ENCODE measurements at regions of chr5 and their contacts with region 1.

Region 1: DNA sequence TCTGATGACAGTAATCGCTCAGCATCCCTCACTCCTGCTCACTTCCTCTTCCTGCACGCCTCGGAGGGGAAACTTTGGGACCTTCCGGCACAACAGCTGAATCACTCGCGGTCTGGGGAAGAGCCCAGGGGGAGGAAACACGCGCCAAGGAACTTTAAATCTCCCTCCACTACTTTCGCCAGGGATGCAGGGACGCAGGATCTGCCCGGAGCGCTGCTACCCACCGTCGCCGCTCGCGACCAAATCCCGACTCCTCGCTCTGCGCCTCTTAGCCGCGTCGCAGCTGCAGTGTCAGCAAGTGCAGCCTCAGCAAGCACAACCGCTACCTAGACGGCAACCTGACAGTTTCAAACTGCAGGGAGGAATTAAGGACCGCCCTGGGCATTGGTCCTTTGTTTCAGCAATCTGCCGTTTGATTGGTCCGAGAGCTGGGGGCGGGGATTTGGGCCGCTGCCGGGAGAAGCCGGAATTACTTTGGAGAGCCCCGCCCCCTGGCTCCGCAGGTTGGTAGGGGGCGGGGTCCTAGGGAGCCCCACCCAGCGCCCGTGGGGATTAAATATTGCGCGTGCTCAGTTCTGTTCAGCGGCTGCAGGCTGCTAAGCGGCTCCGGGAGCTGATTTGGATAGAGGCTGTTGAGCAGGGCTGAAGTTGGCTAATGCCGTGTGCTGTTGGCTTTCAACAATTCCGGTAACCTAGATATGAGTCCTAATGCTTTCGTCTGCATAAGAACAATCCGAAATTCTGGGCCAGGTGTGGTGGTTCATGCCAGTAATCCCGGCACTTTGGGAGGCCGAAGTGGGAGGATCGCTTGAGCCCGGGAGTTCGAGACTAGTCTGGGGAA is at the start of gene POC5:
- DNase-seq: peak; percentile 98
- ATAC-seq: peak; percentile 95
- H3K4me3 ChIP-seq: peak within 1 kb of the TSS; percentile 80 to 99 (median 89)
- H3K4me3 Mint-ChIP-seq: peak within 1 kb of the TSS; percentile 100
- H3K27ac ChIP-seq: peak within 1 kb of the TSS; percentile 80 to 85
- H3K27ac Mint-ChIP-seq: peak within 1 kb of the TSS; percentile 99
- H3K4me1 ChIP-seq: peaks cover 12 to 18% of the 10 kb centered on the region in 2 donors
- H3K4me1 Mint-ChIP-seq: peaks cover 37% of the 10 kb centered on the region
- H3K27me3 ChIP-seq: peaks cover 0 to 4% (median 0%) of the 10 kb centered on the region in 4 experiments
- H3K27me3 Mint-ChIP-seq: peaks cover 6% of the 10 kb centered on the region
- CTCF ChIP-seq: no peak
- total RNA-seq, gene POC5: 22.7 and 25.5 TPM in 2 replicates

Region 2: GRCh38 chr5:74684900-74685851 is 1032.1 kb before region 1 on chr5 and contains the start of gene HEXB:
- CTCF ChIA-PET with region 1: no interaction called
- POLR2A ChIA-PET with region 1: no interaction called
- intact Hi-C with region 1: loop called (anchors 2 kb)
- DNase-seq: peak; percentile 80
- ATAC-seq: peak; percentile 85
- H3K4me3 ChIP-seq: peak within 1 kb of the TSS; percentile 80 to 98 (median 88)
- H3K4me3 Mint-ChIP-seq: peak within 1 kb of the TSS; percentile 87
- H3K27ac ChIP-seq: peak within 1 kb of the TSS; percentile 42 to 67
- H3K27ac Mint-ChIP-seq: peak within 1 kb of the TSS; percentile 75
- H3K4me1 ChIP-seq: peaks cover 12 to 16% of the 10 kb centered on the region in 2 donors
- H3K4me1 Mint-ChIP-seq: peaks cover 20% of the 10 kb centered on the region
- H3K27me3 ChIP-seq: no peaks in the 10 kb centered on the region
- H3K27me3 Mint-ChIP-seq: peaks cover 2% of the 10 kb centered on the region
- CTCF ChIP-seq: no peak
- total RNA-seq, gene HEXB: 47.1 and 55.3 TPM in 2 replicates

Region 3: DNA sequence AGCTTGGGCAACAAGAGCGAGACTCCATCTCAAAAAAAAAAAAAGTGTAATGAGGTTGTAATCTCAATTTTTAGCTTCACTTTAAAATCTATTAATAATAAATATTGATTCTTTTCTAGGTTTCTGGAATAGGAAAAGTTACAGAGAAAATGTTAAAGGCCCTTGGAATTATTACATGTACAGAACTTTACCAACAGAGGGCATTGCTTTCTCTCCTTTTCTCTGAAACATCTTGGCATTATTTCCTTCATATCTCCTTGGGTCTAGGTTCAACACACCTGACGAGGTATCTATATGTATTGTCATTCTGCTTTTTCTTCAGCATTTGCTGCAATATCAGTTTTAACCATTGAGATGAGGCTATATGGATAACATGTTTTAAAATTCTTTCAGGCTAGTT is 132.7 kb before region 1 on chr5:
- CTCF ChIA-PET with region 1: no interaction called
- POLR2A ChIA-PET with region 1: no interaction called
- intact Hi-C with region 1: no loop called
- DNase-seq: no peak
- ATAC-seq: no peak
- H3K4me3 ChIP-seq: no peak overlapping the region
- H3K4me3 Mint-ChIP-seq: no peak overlapping the region
- H3K27ac ChIP-seq: no peak overlapping the region
- H3K27ac Mint-ChIP-seq: no peak overlapping the region
- H3K4me1 ChIP-seq: no peaks in the 10 kb centered on the region
- H3K4me1 Mint-ChIP-seq: no peaks in the 10 kb centered on the region
- H3K27me3 ChIP-seq: no peaks in the 10 kb centered on the region
- H3K27me3 Mint-ChIP-seq: no peaks in the 10 kb centered on the region
- CTCF ChIP-seq: no peak

Region 4: DNA sequence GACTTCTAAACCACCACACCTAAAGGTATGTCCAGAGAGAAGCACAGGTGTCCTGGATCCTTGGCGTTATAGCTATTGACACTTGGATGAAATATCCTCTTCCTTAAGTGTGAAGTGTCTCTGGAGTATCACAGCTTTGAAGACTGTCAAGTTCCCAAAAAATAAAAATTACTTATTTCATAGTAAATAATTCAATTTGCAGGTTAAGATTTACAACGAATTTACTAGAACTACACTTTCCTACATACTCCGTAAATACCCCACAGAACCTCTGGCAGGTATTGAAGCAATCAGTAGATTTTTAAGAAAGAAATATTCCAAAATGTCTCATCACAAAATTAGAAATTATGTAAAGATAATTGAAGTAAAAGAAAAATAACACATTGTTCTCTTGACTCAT is 27.1 kb after region 1 on chr5:
- CTCF ChIA-PET with region 1: no interaction called
- POLR2A ChIA-PET with region 1: no interaction called
- intact Hi-C with region 1: no loop called
- DNase-seq: no peak
- ATAC-seq: no peak
- H3K4me3 ChIP-seq: no peak overlapping the region
- H3K4me3 Mint-ChIP-seq: no peak overlapping the region
- H3K27ac ChIP-seq: no peak overlapping the region
- H3K27ac Mint-ChIP-seq: no peak overlapping the region
- H3K4me1 ChIP-seq: no peaks in the 10 kb centered on the region
- H3K4me1 Mint-ChIP-seq: no peaks in the 10 kb centered on the region
- H3K27me3 ChIP-seq: no peaks in the 10 kb centered on the region
- H3K27me3 Mint-ChIP-seq: peaks cover 26% of the 10 kb centered on the region
- CTCF ChIP-seq: no peak

Measured in B cell (primary cell).